ENCODE measurements at regions of chr3 and their contacts with region 1.

Region 1: GRCh38 chr3:11803977-11804892 is 42.5 kb downstream of the TAMM41 start:
- DNase-seq: peak; percentile 56
- H3K4me3 Mint-ChIP-seq: no peak overlapping the region
- H3K27ac Mint-ChIP-seq: no peak overlapping the region
- H3K4me1 Mint-ChIP-seq: peaks cover 2% of the 10 kb centered on the region
- H3K27me3 Mint-ChIP-seq: no peaks in the 10 kb centered on the region

Region 2: DNA sequence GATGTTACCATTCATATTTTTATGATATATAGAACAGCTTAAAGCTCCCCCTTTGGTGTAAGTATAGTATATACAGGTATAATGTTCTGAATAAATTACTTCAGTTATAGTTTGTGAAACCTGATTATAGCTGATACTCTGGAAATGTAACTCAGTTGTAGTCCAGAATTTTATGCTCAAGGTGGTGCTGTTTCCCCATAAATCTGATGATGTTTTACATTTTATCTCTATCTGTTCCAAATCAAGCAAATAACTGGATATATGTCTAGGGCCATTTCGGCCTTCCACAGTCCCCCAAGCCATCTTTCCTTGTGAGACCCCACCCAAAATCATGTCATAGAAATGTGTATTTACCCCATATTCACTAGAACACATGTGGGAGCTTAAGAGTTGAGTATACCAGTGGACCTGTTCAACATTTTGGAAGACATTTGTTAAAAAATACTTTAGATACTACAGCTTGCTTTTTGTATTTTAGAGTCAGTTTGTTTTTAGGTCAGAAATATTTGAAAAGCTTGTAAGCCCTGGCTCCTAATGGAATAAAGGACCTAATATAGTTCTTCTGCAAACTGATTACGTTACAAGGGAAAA is 424.9 kb before region 1 on chr3:
- CTCF ChIA-PET with region 1: interaction called, 5 read pairs
- intact Hi-C with region 1: loop called (anchors 1 kb)
- DNase-seq: no peak
- H3K4me3 Mint-ChIP-seq: no peak overlapping the region
- H3K27ac Mint-ChIP-seq: no peak overlapping the region
- H3K4me1 Mint-ChIP-seq: no peaks in the 10 kb centered on the region
- H3K27me3 Mint-ChIP-seq: no peaks in the 10 kb centered on the region

Region 3: DNA sequence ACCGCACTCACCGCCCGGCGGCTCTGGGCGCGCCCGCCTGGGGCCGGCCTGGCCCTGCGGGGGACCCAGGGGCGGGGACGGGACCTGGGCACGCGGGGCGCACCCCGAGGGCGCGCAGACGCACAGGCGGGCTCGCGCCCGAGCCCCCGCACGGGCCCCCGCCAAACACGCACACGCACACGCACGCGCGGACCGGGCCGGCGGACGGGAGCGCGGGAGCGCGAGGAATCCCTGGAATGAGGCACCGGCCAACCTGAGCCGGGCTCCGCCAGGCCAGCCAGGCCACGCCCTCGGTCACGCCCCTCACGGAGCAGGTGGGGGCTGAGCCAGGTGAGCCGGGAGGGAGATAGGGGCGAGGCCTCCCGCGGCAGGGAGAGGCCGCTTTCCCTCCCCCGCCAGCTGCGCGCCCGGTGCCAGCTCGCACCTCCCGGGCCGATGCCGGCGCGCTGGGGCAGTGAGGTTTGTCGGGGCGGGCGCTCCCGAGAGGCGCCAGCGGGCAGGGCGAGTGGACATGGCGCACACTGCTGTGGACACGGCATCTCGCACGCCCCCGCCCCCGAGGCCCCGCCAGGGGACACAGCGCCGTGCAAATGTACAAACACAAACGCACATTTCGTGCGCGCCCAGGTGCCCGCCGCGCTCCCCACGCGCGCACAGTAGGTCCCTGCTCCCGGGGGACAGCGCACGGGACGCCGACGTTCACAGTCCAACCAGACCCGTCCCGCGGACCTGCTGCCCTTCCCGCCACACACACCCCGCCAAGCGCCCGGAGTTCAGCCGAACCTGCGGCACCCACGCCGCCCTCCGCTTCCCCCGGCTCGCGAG is 84.6 kb before region 1 on chr3:
- CTCF ChIA-PET with region 1: no interaction called
- intact Hi-C with region 1: loop called (anchors 5 kb)
- DNase-seq: peak; percentile 73
- H3K4me3 Mint-ChIP-seq: peak overlapping the region; percentile 88
- H3K27ac Mint-ChIP-seq: no peak overlapping the region
- H3K4me1 Mint-ChIP-seq: peaks cover 17% of the 10 kb centered on the region
- H3K27me3 Mint-ChIP-seq: peaks cover 5% of the 10 kb centered on the region

Region 4: GRCh38 chr3:11735638-11736037 is 68.6 kb before region 1 on chr3:
- CTCF ChIA-PET with region 1: no interaction called
- intact Hi-C with region 1: loop called (anchors 1 kb)
- DNase-seq: peak; percentile 6
- H3K4me3 Mint-ChIP-seq: no peak overlapping the region
- H3K27ac Mint-ChIP-seq: no peak overlapping the region
- H3K4me1 Mint-ChIP-seq: peaks cover 3% of the 10 kb centered on the region
- H3K27me3 Mint-ChIP-seq: no peaks in the 10 kb centered on the region

Measured in activated naive CD4-positive, alpha-beta T cell treated with anti-CD3 and anti-CD28 coated beads for 36 hours (primary cell).